ENCODE measurements at regions of chr1 and their contacts with region 1.

Region 1: GRCh38 chr1:201042779-201043461 is 19.4 kb upstream of the KIF21B start:
- DNase-seq: no peak
- H3K4me3 ChIP-seq: no peak overlapping the region
- H3K27me3 ChIP-seq: peaks cover 6% of the 10 kb centered on the region
- CTCF ChIP-seq: peak; percentile 86

Region 2: DNA sequence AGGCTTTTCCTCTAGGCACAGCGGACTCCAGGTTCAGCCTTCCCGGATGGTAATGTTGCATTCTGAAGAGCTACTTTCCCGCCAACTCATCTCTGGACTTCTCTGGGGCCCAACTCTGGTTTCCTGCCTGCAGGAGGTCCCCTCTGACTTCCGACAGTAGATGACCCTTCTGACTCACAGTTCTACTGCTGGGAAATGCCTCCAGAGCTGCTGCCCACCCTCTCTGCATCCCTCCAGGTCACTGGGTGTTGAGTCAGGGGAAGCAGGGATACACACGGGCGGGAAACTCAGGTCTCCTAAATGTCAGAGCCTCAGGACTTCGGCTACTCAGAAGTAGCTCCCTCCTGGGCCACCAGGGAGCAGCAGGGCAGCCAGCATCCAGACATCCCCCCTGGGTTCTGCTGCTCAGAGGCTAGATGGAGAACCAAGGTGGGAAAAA is 17.3 kb before region 1 on chr1:
- CTCF ChIA-PET with region 1: interaction called, 22 read pairs
- POLR2A ChIA-PET with region 1: no interaction called
- DNase-seq: no peak
- H3K4me3 ChIP-seq: no peak overlapping the region
- H3K27me3 ChIP-seq: peaks cover 19% of the 10 kb centered on the region
- CTCF ChIP-seq: peak; percentile 27